ENCODE measurements at regions of chr15 and their contacts with region 1.

Region 1: DNA sequence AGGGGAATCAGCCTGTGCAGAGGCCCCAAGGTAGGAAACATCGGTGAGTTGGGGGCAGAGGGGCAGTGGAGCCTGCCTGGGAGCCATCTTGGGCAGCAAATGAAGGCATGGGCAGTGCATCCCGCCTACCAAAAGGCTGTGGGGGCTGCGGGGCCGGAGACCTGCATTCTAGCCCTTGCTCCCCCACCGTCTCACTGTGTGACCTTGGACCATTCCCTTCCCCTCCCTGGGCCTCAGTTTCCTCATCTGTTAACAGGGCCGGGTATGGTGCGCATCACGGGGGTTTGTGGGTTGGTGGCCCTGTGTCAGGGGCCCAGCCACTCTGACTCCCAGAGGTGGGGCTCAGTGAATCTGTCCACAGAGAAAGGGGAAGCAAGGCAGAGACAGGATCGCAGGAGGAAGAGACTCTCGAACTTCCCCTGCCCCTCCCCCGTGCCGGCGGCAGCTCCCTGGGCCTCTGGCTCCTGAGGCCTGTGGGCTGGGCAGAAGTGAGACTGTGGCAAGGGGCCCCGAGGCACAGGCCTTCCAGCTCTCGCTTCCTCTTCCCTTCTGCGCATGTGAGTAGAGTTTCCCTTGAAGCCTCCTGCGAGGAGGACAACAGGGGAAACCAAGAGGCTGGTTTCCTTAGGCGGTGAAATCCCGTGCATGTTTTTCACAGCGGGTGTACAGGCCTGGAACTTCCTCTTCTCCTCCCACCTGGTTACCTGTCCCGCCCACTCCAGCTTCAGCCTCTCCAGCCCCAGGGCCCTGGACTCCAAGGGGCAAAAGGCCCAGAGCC is 42.9 kb downstream of the IDH2 start:
- DNase-seq: peak; percentile 99 to 100 (median 99)
- H3K4me3 ChIP-seq: peak overlapping the region in 1 of 3 experiments; percentile 22
- H3K4me3 Mint-ChIP-seq: peak overlapping the region in 1 of 2 donors; percentile 46
- H3K27ac ChIP-seq: peak overlapping the region; percentile 91 to 96
- H3K27ac Mint-ChIP-seq: peak overlapping the region; percentile 95 to 99 (median 97)
- H3K4me1 ChIP-seq: peaks cover 90 to 94% of the 10 kb centered on the region in 2 donors
- H3K4me1 Mint-ChIP-seq: peaks cover 90% of the 10 kb centered on the region
- H3K27me3 ChIP-seq: no peaks in the 10 kb centered on the region
- H3K27me3 Mint-ChIP-seq: peaks cover 0 to 4% (median 0%) of the 10 kb centered on the region in 3 donors
- CTCF ChIP-seq: no peak

Region 2: GRCh38 chr15:89893696-89894455 is 165.5 kb before region 1 on chr15 and contains the start of gene AP3S2:
- intact Hi-C with region 1: loop called in 1 of 2 experiments (anchors 5 kb)
- DNase-seq: peak; percentile 90 to 94 (median 92)
- H3K4me3 ChIP-seq: peak within 1 kb of the TSS; percentile 70 to 97 (median 75)
- H3K4me3 Mint-ChIP-seq: peak within 1 kb of the TSS; percentile 95 to 98
- H3K27ac ChIP-seq: peak within 1 kb of the TSS; percentile 94 to 99
- H3K27ac Mint-ChIP-seq: peak within 1 kb of the TSS; percentile 98 to 100 (median 99)
- H3K4me1 ChIP-seq: peaks cover 35 to 57% of the 10 kb centered on the region in 2 donors
- H3K4me1 Mint-ChIP-seq: peaks cover 48% of the 10 kb centered on the region
- H3K27me3 ChIP-seq: no peaks in the 10 kb centered on the region
- H3K27me3 Mint-ChIP-seq: peaks cover 0 to 3% (median 1%) of the 10 kb centered on the region in 3 donors
- CTCF ChIP-seq: no peak
- polyA plus RNA-seq, gene AP3S2: 30.8 to 41.2 (median 32.4) TPM

Region 3: GRCh38 chr15:90013503-90013937 is 45.9 kb before region 1 on chr15:
- intact Hi-C with region 1: loop called in 1 of 2 experiments (anchors 5 kb)
- DNase-seq: peak; percentile 51 to 80 (median 63)
- H3K4me3 ChIP-seq: peak overlapping the region in 1 of 3 experiments; percentile 64
- H3K4me3 Mint-ChIP-seq: peak overlapping the region in 1 of 2 donors; percentile 77
- H3K27ac ChIP-seq: peak overlapping the region in 1 of 2 donors; percentile 74
- H3K27ac Mint-ChIP-seq: peak overlapping the region; percentile 76 to 92 (median 79)
- H3K4me1 ChIP-seq: peaks cover 82 to 91% of the 10 kb centered on the region in 2 donors
- H3K4me1 Mint-ChIP-seq: peaks cover 82% of the 10 kb centered on the region
- H3K27me3 ChIP-seq: no peaks in the 10 kb centered on the region
- H3K27me3 Mint-ChIP-seq: peaks cover 0 to 2% (median 2%) of the 10 kb centered on the region in 3 donors
- CTCF ChIP-seq: no peak

Region 4: GRCh38 chr15:90037961-90038631 is 21.3 kb before region 1 on chr15:
- intact Hi-C with region 1: loop called in 1 of 2 experiments (anchors 2 kb)
- DNase-seq: peak; percentile 64 to 75 (median 73)
- H3K4me3 ChIP-seq: peak overlapping the region in 1 of 3 experiments; percentile 39
- H3K4me3 Mint-ChIP-seq: no peak overlapping the region
- H3K27ac ChIP-seq: peak overlapping the region; percentile 91 to 97
- H3K27ac Mint-ChIP-seq: peak overlapping the region; percentile 93 to 99 (median 98)
- H3K4me1 ChIP-seq: peaks cover 80 to 89% of the 10 kb centered on the region in 2 donors
- H3K4me1 Mint-ChIP-seq: peaks cover 87% of the 10 kb centered on the region
- H3K27me3 ChIP-seq: no peaks in the 10 kb centered on the region
- H3K27me3 Mint-ChIP-seq: peaks cover 0 to 2% (median 2%) of the 10 kb centered on the region in 3 donors
- CTCF ChIP-seq: no peak

Region 5: GRCh38 chr15:90845201-90845949 is 786.0 kb after region 1 on chr15:
- intact Hi-C with region 1: no loop called
- DNase-seq: peak; percentile 91 to 97 (median 95)
- H3K4me3 ChIP-seq: peak overlapping the region in 1 of 3 experiments; percentile 31
- H3K4me3 Mint-ChIP-seq: peak overlapping the region in 1 of 2 donors; percentile 51
- H3K27ac ChIP-seq: peak overlapping the region; percentile 84 to 97
- H3K27ac Mint-ChIP-seq: peak overlapping the region; percentile 93 to 98 (median 96)
- H3K4me1 ChIP-seq: peaks cover 36 to 47% of the 10 kb centered on the region in 2 donors
- H3K4me1 Mint-ChIP-seq: peaks cover 41% of the 10 kb centered on the region
- H3K27me3 ChIP-seq: no peaks in the 10 kb centered on the region
- H3K27me3 Mint-ChIP-seq: peaks cover 0 to 3% (median 3%) of the 10 kb centered on the region in 3 donors
- CTCF ChIP-seq: no peak

Measured in CD14-positive monocyte (primary cell).